BJ (cell line): ENCODE measurements at regions of chr5 and their contacts with region 1.

Region 1: GRCh38 chr5:55936100-55936693 is 58.6 kb downstream of the IL6ST start:
- DNase-seq: peak; percentile 29
- H3K4me3 ChIP-seq: no peak overlapping the region
- H3K27me3 ChIP-seq: no peaks in the 10 kb centered on the region
- CTCF ChIP-seq: peak; percentile 91

Region 2: DNA sequence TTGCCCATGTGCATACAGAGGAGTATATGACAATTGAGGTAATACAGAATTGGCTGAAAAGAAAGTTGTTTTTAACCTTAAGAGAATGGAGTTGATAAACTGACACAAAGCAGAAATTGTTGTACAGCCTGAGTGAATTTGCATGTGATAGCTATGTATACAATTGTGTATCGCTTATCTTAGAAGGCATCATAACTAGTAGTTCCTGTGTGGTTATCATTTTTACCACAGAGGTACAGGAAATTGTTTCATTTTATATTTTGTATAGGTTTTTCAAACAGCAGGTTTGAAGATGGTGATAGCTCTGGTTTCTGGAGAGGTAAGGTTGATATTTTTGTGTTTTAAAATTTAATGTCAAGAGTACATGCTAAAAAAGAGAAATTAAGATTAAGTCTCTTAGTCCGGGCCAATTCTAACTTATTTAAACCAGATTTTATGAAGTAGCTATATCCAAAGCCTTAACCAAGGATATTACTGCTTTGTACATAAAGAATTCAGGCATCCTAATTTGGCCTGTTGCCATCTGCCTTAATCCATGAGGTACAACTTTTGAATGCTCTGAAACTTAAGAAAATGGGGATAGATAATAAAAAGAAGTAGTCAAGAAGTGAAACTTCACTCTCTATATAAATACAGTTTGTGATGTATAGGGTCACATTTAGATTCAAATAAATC is 172.3 kb before region 1 on chr5:
- CTCF ChIA-PET with region 1: no interaction called
- POLR2A ChIA-PET with region 1: no interaction called
- DNase-seq: no peak
- H3K4me3 ChIP-seq: no peak overlapping the region
- H3K27me3 ChIP-seq: peaks cover 2% of the 10 kb centered on the region
- CTCF ChIP-seq: no peak

Region 3: GRCh38 chr5:55923177-55923771 is 12.9 kb before region 1 on chr5:
- CTCF ChIA-PET with region 1: interaction called, 14 read pairs
- POLR2A ChIA-PET with region 1: no interaction called
- DNase-seq: no peak
- H3K4me3 ChIP-seq: no peak overlapping the region
- H3K27me3 ChIP-seq: no peaks in the 10 kb centered on the region
- CTCF ChIP-seq: no peak

Region 4: GRCh38 chr5:55991768-55992486 is 55.7 kb after region 1 on chr5:
- CTCF ChIA-PET with region 1: no interaction called
- POLR2A ChIA-PET with region 1: interaction called, 21 read pairs
- DNase-seq: no peak
- H3K4me3 ChIP-seq: peak overlapping the region; percentile 76
- H3K27me3 ChIP-seq: no peaks in the 10 kb centered on the region
- CTCF ChIP-seq: no peak

Region 5: DNA sequence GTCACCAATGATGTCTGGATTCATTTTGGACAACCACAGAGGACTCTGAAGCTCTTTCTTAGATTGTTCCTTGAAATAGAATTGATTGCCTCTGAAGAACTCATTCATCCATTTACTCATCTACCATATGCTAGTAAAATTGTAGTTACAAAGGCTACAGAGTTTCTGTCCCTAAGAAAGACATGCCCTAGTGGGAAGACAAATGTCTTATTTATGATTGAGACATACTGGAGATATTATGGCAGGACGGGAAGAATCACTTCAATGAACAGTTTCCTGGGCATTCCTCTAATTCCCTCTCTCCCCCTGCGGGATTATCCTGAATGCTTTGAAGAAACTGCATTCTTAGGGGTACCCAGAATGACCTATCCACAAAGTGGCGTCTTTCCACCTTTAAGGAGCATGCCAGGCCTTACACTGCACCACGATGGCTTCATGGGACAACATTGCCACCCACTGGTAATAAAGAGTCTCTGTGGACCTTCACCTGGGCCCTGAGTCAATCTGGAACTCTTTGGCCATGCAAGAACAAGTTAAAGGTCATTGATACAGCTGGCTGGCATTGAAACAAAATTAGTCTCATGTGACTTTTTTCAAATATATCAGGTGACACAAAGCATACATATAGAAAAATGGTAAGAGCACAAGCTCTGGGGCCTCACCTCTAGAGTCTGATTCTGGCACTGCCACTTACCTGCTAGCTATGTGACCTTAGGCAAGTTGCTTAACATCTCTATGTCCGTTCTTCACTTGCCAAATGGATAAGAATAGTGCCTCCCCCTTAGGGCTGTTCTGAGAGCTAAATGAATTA is 264.9 kb after region 1 on chr5:
- CTCF ChIA-PET with region 1: interaction called, 37 read pairs
- POLR2A ChIA-PET with region 1: no interaction called
- DNase-seq: no peak
- H3K4me3 ChIP-seq: no peak overlapping the region
- H3K27me3 ChIP-seq: no peaks in the 10 kb centered on the region
- CTCF ChIP-seq: peak; percentile 72